ENCODE measurements at regions of chr2 and their contacts with region 1.

Region 1: GRCh38 chr2:191501561-191502168 is 176.3 kb upstream of the NABP1 start:
- DNase-seq: peak; percentile 33 to 64
- ATAC-seq: peak; percentile 52 to 71; a peak in 3 of 6 replicates
- H3K4me3 ChIP-seq: no peak overlapping the region
- H3K27ac ChIP-seq: peak overlapping the region; percentile 37 to 83
- H3K4me1 ChIP-seq: peaks cover 32% of the 10 kb centered on the region
- CTCF ChIP-seq: peak; percentile 79
- EP300 ChIP-seq: no peak
- POLR2A ChIP-seq: no peak
- RAD21 ChIP-seq: peak; percentile 87 to 88

Region 2: GRCh38 chr2:191086706-191087105 is 415.0 kb before region 1 on chr2:
- CTCF ChIA-PET with region 1: no interaction called
- POLR2A ChIA-PET with region 1: no interaction called
- DNase-seq: no peak
- ATAC-seq: no peak
- H3K4me3 ChIP-seq: no peak overlapping the region
- H3K27ac ChIP-seq: no peak overlapping the region
- H3K4me1 ChIP-seq: no peaks in the 10 kb centered on the region
- CTCF ChIP-seq: no peak
- EP300 ChIP-seq: no peak
- POLR2A ChIP-seq: no peak
- RAD21 ChIP-seq: no peak

Region 3: DNA sequence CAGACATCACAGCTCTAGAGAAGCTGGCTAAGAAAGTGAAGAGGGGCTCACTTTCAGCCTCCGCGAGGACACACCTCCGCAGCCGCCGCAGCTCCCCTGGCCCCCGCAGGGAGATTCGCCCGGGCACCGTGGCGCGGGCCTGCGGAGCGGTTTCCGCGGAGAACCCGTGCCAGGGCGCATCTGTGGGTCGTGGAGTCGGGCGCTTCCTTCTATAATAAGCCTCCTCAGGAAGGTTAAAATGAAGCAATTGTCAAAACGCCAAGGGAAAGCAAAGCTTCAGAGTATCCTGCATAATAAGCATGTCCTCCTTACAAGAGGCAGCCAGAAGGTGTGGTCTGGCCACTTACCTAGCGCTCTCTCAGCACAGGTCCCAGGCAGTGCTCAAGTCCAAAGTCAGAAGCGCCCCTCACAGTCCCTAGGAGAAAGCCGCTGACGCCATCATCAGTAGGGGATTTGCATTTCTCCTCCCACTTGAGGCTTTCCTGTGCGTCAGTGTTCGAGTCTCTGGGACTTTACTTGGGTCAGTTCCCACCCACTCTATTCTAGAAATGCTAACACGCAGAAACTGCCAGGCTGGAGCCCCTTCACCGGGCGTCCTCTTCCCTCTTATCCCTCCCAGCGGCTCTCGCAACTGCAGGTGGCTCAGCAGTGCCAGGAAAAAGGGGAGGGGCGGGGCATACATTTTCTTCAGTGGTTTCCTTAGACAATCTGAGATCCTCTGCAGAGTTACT is 350.9 kb before region 1 on chr2 and contains the start of gene STAT4:
- CTCF ChIA-PET with region 1: interaction called, 12 read pairs
- POLR2A ChIA-PET with region 1: no interaction called
- DNase-seq: peak; percentile 43 to 67
- ATAC-seq: peak; percentile 86 to 91
- H3K4me3 ChIP-seq: peak within 1 kb of the TSS; percentile 75
- H3K27ac ChIP-seq: peak within 1 kb of the TSS; percentile 65 to 84
- H3K4me1 ChIP-seq: peaks cover 29% of the 10 kb centered on the region; the same call in 2 of the 3 replicates
- CTCF ChIP-seq: no peak
- EP300 ChIP-seq: no peak
- POLR2A ChIP-seq: 0 out of 2 replicates have a peak, but pooled peaks have one; percentile 5
- RAD21 ChIP-seq: no peak
- polyA plus RNA-seq, gene STAT4: 32.4 and 34.4 TPM in 2 replicates

Region 4: GRCh38 chr2:191165176-191165643 is 336.5 kb before region 1 on chr2:
- CTCF ChIA-PET with region 1: interaction called, 172 read pairs
- POLR2A ChIA-PET with region 1: no interaction called
- DNase-seq: peak; percentile 42 to 65
- ATAC-seq: peak; percentile 65 to 81
- H3K4me3 ChIP-seq: no peak overlapping the region
- H3K27ac ChIP-seq: peak overlapping the region; percentile 85 to 95
- H3K4me1 ChIP-seq: peaks cover 51% of the 10 kb centered on the region
- CTCF ChIP-seq: peak; percentile 92
- EP300 ChIP-seq: no peak
- POLR2A ChIP-seq: no peak
- RAD21 ChIP-seq: peak; percentile 95 to 98

Region 5: GRCh38 chr2:191295088-191295487 is 206.6 kb before region 1 on chr2:
- CTCF ChIA-PET with region 1: no interaction called
- POLR2A ChIA-PET with region 1: no interaction called
- DNase-seq: no peak
- ATAC-seq: no peak
- H3K4me3 ChIP-seq: no peak overlapping the region
- H3K27ac ChIP-seq: no peak overlapping the region
- H3K4me1 ChIP-seq: peaks cover 54% of the 10 kb centered on the region
- CTCF ChIP-seq: no peak
- EP300 ChIP-seq: no peak
- POLR2A ChIP-seq: no peak
- RAD21 ChIP-seq: no peak

Region 6: GRCh38 chr2:191428141-191428540 is 73.5 kb before region 1 on chr2:
- CTCF ChIA-PET with region 1: interaction called, 12 read pairs
- POLR2A ChIA-PET with region 1: no interaction called
- DNase-seq: no peak
- ATAC-seq: no peak
- H3K4me3 ChIP-seq: no peak overlapping the region
- H3K27ac ChIP-seq: no peak overlapping the region
- H3K4me1 ChIP-seq: no peaks in the 10 kb centered on the region
- CTCF ChIP-seq: no peak
- EP300 ChIP-seq: no peak
- POLR2A ChIP-seq: no peak
- RAD21 ChIP-seq: no peak

Region 7: GRCh38 chr2:191459158-191459557 is 42.5 kb before region 1 on chr2:
- CTCF ChIA-PET with region 1: no interaction called
- POLR2A ChIA-PET with region 1: no interaction called
- DNase-seq: no peak
- ATAC-seq: no peak
- H3K4me3 ChIP-seq: no peak overlapping the region
- H3K27ac ChIP-seq: no peak overlapping the region
- H3K4me1 ChIP-seq: no peaks in the 10 kb centered on the region
- CTCF ChIP-seq: no peak
- EP300 ChIP-seq: no peak
- POLR2A ChIP-seq: no peak
- RAD21 ChIP-seq: no peak

Region 8: DNA sequence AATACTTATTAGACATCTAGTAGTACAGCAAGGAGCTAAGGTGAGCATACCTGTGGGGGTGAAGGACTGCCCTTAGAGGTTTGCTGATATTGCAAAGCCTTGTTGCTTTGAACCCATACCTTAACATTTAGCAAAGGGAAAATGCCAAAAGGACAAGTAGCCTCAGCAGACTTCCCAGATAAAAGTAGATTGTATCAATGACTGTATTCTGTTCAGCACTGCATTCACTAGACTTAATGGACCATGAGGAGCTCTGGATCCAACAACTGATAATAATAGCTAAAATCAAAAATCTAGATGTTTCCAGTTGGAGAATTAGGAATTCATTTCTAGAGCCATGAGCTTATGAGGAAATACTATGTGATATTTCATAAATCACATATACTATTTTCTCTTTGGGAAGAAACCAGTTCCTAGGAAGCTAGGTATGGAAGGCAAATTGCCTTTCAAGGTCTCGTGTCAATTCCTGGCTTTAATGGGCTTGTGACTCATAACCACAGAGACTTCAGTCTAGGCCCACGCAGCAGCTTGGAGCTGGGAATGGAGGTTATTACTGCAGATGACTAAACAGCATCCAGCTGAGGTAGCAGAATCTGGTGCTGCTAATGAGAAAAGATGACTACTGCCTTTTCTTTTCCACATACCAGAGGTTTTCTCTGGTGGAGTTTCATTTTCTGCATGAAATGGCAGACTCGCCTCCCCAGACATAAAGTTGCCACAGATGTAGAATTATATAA is 14.9 kb before region 1 on chr2:
- CTCF ChIA-PET with region 1: interaction called, 56 read pairs
- POLR2A ChIA-PET with region 1: no interaction called
- DNase-seq: no peak
- ATAC-seq: peak in 1 of 2 experiments; percentile 61; a peak in 2 of 6 replicates
- H3K4me3 ChIP-seq: no peak overlapping the region
- H3K27ac ChIP-seq: no peak overlapping the region
- H3K4me1 ChIP-seq: peaks cover 15% of the 10 kb centered on the region
- CTCF ChIP-seq: no peak
- EP300 ChIP-seq: no peak
- POLR2A ChIP-seq: no peak
- RAD21 ChIP-seq: no peak